ENCODE measurements at regions of chr2 and their contacts with region 1.

Region 1: GRCh38 chr2:11863513-11864328 is 117.3 kb downstream of the LPIN1 start:
- DNase-seq: peak; percentile 96
- H3K4me3 Mint-ChIP-seq: peak overlapping the region; percentile 9
- H3K27ac Mint-ChIP-seq: peak overlapping the region; percentile 80
- H3K4me1 Mint-ChIP-seq: peaks cover 21% of the 10 kb centered on the region
- H3K27me3 Mint-ChIP-seq: no peaks in the 10 kb centered on the region
- CTCF ChIP-seq: peak; percentile 92

Region 2: GRCh38 chr2:11553661-11554398 is 309.9 kb before region 1 on chr2:
- CTCF ChIA-PET with region 1: no interaction called
- POLR2A ChIA-PET with region 1: no interaction called
- intact Hi-C with region 1: no loop called
- DNase-seq: peak; percentile 41
- H3K4me3 Mint-ChIP-seq: no peak overlapping the region
- H3K27ac Mint-ChIP-seq: no peak overlapping the region
- H3K4me1 Mint-ChIP-seq: peaks cover 7% of the 10 kb centered on the region
- H3K27me3 Mint-ChIP-seq: peaks cover 17% of the 10 kb centered on the region
- CTCF ChIP-seq: no peak

Region 3: GRCh38 chr2:11829947-11830707 is 33.6 kb before region 1 on chr2:
- CTCF ChIA-PET with region 1: interaction called, 4 read pairs
- POLR2A ChIA-PET with region 1: interaction called, 4 read pairs
- intact Hi-C with region 1: loop called (anchors 1 kb)
- DNase-seq: peak; percentile 98
- H3K4me3 Mint-ChIP-seq: peak overlapping the region; percentile 62
- H3K27ac Mint-ChIP-seq: peak overlapping the region; percentile 46
- H3K4me1 Mint-ChIP-seq: peaks cover 11% of the 10 kb centered on the region
- H3K27me3 Mint-ChIP-seq: no peaks in the 10 kb centered on the region
- CTCF ChIP-seq: peak; percentile 58

Region 4: GRCh38 chr2:11955314-11955713 is 91.6 kb after region 1 on chr2:
- CTCF ChIA-PET with region 1: interaction called, 18 read pairs
- POLR2A ChIA-PET with region 1: interaction called, 6 read pairs
- intact Hi-C with region 1: loop called (anchors 1 kb)
- DNase-seq: peak; percentile 86
- H3K4me3 Mint-ChIP-seq: no peak overlapping the region
- H3K27ac Mint-ChIP-seq: peak overlapping the region; percentile 47
- H3K4me1 Mint-ChIP-seq: peaks cover 28% of the 10 kb centered on the region
- H3K27me3 Mint-ChIP-seq: no peaks in the 10 kb centered on the region
- CTCF ChIP-seq: no peak

Region 5: GRCh38 chr2:12106440-12107080 is 242.8 kb after region 1 on chr2:
- CTCF ChIA-PET with region 1: no interaction called
- POLR2A ChIA-PET with region 1: no interaction called
- intact Hi-C with region 1: loop called (anchors 1 kb)
- DNase-seq: peak; percentile 97
- H3K4me3 Mint-ChIP-seq: peak overlapping the region; percentile 56
- H3K27ac Mint-ChIP-seq: peak overlapping the region; percentile 79
- H3K4me1 Mint-ChIP-seq: peaks cover 20% of the 10 kb centered on the region
- H3K27me3 Mint-ChIP-seq: no peaks in the 10 kb centered on the region
- CTCF ChIP-seq: no peak

Region 6: DNA sequence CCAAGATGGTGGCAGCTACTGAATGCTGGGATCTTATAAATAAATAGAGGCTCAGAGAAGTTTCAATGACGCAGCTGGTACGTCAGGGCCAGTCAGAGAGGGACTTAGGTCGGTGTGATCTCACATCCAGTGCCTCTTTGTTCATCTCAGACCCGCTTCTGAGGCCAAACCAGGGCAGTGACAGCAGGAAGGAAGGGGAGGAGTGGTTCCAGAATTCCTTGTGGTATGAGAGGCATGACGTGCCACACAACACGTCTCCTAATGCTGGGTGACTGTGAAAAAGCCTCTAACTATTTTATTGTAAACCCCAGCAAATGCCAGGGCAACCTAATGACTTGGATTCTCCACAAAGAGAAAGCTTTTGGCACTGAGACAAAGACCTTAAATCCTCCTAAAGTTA is 306.0 kb after region 1 on chr2:
- CTCF ChIA-PET with region 1: no interaction called
- POLR2A ChIA-PET with region 1: no interaction called
- intact Hi-C with region 1: loop called (anchors 1 kb)
- DNase-seq: no peak
- H3K4me3 Mint-ChIP-seq: no peak overlapping the region
- H3K27ac Mint-ChIP-seq: no peak overlapping the region
- H3K4me1 Mint-ChIP-seq: no peaks in the 10 kb centered on the region
- H3K27me3 Mint-ChIP-seq: no peaks in the 10 kb centered on the region
- CTCF ChIP-seq: no peak

Region 7: DNA sequence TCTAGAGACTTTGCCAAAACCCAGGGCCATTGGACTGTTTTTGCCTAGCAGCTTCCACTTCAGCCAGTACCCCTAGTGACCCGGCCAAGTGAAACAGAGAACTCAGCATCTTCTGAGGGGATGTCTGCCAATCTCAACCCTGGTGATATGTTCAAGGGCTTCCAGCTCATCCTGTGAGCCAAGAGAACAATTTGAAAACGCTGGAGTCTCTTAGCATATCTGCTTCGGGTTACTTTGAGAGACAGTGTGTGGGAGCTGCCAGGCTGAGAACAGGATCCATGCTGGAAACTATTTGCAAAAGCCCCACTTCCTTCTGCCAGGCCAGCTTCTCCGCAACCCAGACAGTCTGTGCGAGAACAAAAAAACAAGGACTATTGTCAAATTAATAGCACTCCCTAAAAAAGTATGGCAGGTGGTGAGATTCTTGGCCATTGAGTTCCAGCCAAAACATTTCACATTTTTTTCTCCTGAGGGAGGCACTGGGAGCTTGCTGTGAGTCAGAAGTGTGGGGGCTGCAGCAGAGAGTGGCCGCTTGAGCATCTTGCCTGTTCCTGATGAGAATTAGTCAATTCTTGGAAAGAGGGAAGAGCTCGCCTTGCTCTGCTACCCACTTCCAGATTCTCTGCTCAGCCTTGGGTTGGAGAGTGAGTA is 457.4 kb after region 1 on chr2:
- CTCF ChIA-PET with region 1: no interaction called
- POLR2A ChIA-PET with region 1: no interaction called
- intact Hi-C with region 1: loop called (anchors 10 kb)
- DNase-seq: peak; percentile 90
- H3K4me3 Mint-ChIP-seq: no peak overlapping the region
- H3K27ac Mint-ChIP-seq: peak overlapping the region; percentile 71
- H3K4me1 Mint-ChIP-seq: peaks cover 51% of the 10 kb centered on the region
- H3K27me3 Mint-ChIP-seq: no peaks in the 10 kb centered on the region
- CTCF ChIP-seq: no peak